ENCODE measurements at regions of chr4 and their contacts with region 1.

Region 1: DNA sequence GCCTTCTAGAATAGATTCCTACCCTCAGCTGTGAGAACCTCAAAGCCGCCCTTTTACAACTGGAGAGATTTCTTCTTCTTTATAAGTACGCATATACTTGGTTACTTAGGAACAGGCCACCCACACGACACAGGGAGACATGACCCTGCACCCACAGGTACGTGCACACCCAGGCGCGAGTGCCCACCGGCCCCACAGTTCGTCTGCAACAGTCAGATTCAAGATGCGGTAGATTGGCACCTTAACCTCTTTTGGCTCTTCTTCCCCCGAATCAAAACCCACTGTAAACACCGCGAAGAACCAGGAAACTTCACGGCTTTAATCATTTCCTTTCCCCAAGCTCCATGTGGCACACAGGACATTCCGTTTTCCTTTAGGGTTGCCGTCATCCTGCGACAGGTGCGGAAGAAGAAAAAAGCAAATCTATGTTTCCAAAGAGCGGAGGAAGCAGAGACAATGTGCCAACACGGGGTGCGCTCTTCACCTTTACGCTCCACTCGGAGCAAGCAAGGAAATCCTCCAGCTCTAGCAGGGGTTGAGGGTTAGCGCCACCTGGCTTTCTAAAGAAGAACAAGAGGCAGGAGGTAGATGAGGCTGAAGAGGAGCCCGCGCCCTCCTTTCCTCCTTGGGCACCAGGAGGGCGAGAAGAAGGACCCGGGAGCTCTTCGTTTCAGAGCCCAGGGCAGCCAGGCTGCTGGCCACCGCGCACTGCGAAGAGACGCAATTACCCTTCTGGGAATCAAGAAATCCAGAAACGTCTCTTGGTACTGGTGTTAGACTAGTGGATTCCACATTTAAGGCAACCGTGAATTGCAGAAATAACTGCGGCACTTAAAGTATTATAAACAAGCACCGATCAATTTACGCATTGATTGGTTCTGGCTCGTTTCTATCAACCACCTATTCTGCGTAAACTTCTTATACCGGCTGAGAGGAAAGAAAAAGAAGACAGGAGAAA is 35.7 kb downstream of the HAND2 start:
- DNase-seq: peak; percentile 75
- H3K4me3 Mint-ChIP-seq: peak overlapping the region; percentile 64
- H3K27ac Mint-ChIP-seq: no peak overlapping the region
- H3K4me1 Mint-ChIP-seq: peaks cover 10% of the 10 kb centered on the region
- H3K27me3 Mint-ChIP-seq: peaks cover 32% of the 10 kb centered on the region

Region 2: GRCh38 chr4:173318648-173319211 is 175.6 kb before region 1 on chr4:
- CTCF ChIA-PET with region 1: interaction called, 4 read pairs
- intact Hi-C with region 1: loop called (anchors 1 kb)
- DNase-seq: no peak
- H3K4me3 Mint-ChIP-seq: no peak overlapping the region
- H3K27ac Mint-ChIP-seq: no peak overlapping the region
- H3K4me1 Mint-ChIP-seq: peaks cover 11% of the 10 kb centered on the region
- H3K27me3 Mint-ChIP-seq: no peaks in the 10 kb centered on the region

Region 3: GRCh38 chr4:173334085-173334772 is 160.1 kb before region 1 on chr4 and contains the start of gene HMGB2:
- CTCF ChIA-PET with region 1: no interaction called
- intact Hi-C with region 1: loop called (anchors 1 kb)
- DNase-seq: peak; percentile 100
- H3K4me3 Mint-ChIP-seq: peak within 1 kb of the TSS; percentile 99
- H3K27ac Mint-ChIP-seq: peak within 1 kb of the TSS; percentile 99
- H3K4me1 Mint-ChIP-seq: peaks cover 15% of the 10 kb centered on the region
- H3K27me3 Mint-ChIP-seq: peaks cover 12% of the 10 kb centered on the region
- total RNA-seq, gene HMGB2: 752 to 787 TPM

Region 4: GRCh38 chr4:173370477-173371291 is 123.6 kb before region 1 on chr4 and contains the start of gene SAP30:
- CTCF ChIA-PET with region 1: no interaction called
- intact Hi-C with region 1: loop called (anchors 1 kb)
- DNase-seq: peak; percentile 98
- H3K4me3 Mint-ChIP-seq: peak within 1 kb of the TSS; percentile 99
- H3K27ac Mint-ChIP-seq: peak within 1 kb of the TSS; percentile 99
- H3K4me1 Mint-ChIP-seq: peaks cover 18% of the 10 kb centered on the region
- H3K27me3 Mint-ChIP-seq: peaks cover 20% of the 10 kb centered on the region
- total RNA-seq, gene SAP30: 9.2 to 9.7 TPM